ENCODE measurements at regions of chr16 and their contacts with region 1.

Region 1: DNA sequence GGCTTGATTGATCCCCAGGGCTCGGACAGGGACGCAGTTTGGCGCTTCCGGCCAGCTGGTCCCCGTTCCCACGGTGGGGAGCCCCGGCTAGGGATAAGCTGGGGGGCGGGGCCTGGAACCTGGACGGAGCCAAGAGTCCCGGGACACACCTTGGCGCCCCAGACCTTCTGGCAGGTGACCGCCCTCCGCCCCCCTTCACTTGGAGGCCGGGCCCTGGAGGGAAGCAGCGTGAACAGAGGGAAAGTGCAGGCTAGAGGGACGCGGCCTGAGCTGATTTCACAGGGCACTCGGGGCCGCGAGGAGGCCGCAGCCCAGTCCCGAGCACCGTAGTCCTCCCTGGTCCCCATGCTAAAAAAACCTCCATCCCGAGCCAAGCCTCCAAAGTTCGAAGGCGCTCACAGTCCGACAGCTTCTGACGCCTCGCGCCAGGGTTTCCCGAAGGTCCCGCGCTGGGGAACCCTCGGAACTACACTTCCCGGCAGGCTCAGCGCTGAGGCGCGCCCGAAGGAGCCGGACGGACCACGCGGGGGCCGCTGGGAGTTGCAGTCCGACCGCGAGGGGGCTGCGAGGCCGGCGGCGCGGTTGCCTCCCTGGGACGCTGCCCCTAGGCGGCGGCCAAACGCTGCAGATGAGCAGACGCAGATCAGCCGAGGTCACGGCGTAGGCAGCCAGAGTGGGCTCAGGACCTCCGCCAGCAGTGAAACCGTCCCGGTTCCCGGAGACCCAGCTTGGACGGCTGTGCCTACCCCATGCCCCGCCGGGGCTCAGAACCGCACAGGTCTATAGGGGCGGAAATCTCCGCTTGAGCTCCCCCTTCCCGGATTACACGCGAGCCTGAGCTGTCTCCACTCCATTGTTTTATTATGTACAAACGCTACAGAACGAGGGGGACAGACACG is at the start of gene TBX6:
- DNase-seq: peak; percentile 95
- H3K4me3 Mint-ChIP-seq: peak within 1 kb of the TSS; percentile 86
- H3K27ac Mint-ChIP-seq: peak within 1 kb of the TSS; percentile 95
- H3K4me1 Mint-ChIP-seq: peaks cover 54% of the 10 kb centered on the region
- H3K27me3 Mint-ChIP-seq: no peaks in the 10 kb centered on the region
- total RNA-seq, gene TBX6: 3.6 to 4.7 TPM

Region 2: GRCh38 chr16:30041846-30042267 is 49.9 kb before region 1 on chr16:
- CTCF ChIA-PET with region 1: interaction called, 15 read pairs
- intact Hi-C with region 1: no loop called
- DNase-seq: no peak
- H3K4me3 Mint-ChIP-seq: no peak overlapping the region
- H3K27ac Mint-ChIP-seq: no peak overlapping the region
- H3K4me1 Mint-ChIP-seq: no peaks in the 10 kb centered on the region
- H3K27me3 Mint-ChIP-seq: no peaks in the 10 kb centered on the region

Region 3: DNA sequence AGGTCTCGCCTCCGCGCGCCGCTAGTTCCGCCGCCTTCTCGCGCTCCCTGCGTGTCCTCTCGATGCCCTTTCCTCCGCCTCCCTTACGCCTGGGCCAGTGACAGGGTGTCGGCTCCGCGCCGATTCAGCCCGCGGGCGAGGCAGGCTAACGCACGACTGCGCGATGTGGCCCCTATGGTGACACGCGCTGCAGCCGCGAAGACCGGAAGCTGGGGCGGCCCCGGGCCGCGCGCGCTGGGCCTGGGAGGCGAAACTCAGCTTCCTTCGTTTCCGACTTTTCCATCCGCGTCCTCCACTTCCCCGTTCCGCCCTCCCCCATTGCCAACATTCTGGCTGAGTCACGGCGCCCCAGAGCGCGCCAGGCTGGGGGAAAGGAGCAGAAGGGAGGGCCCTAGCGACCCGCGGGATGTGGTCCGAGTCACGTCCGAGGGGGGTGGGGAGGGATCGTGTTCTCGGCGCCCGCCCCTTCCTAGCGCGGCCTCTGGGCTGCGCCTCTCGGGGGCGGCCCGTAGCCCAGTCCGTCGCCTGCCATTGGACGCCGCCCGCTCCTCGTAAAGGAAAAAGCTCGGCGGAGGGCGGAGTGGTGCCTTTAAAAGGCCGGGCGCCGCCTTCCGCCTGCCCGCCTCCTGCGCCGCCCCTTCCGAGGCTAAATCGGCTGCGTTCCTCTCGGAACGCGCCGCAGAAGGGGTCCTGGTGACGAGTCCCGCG is 26.4 kb before region 1 on chr16 and contains the start of gene ALDOA:
- CTCF ChIA-PET with region 1: interaction called, 16 read pairs
- intact Hi-C with region 1: loop called (anchors 1 kb)
- DNase-seq: peak; percentile 97
- H3K4me3 Mint-ChIP-seq: peak within 1 kb of the TSS; percentile 95
- H3K27ac Mint-ChIP-seq: peak within 1 kb of the TSS; percentile 98
- H3K4me1 Mint-ChIP-seq: peaks cover 32% of the 10 kb centered on the region
- H3K27me3 Mint-ChIP-seq: no peaks in the 10 kb centered on the region
- total RNA-seq, gene ALDOA: 1,750 to 1,795 TPM

Region 4: GRCh38 chr16:30112197-30113030 is 20.7 kb after region 1 on chr16:
- CTCF ChIA-PET with region 1: interaction called, 19 read pairs
- intact Hi-C with region 1: no loop called
- DNase-seq: peak; percentile 78
- H3K4me3 Mint-ChIP-seq: no peak overlapping the region
- H3K27ac Mint-ChIP-seq: peak overlapping the region; percentile 46
- H3K4me1 Mint-ChIP-seq: peaks cover 14% of the 10 kb centered on the region
- H3K27me3 Mint-ChIP-seq: no peaks in the 10 kb centered on the region

Region 5: GRCh38 chr16:30131869-30132475 is 40.2 kb after region 1 on chr16:
- CTCF ChIA-PET with region 1: interaction called, 4 read pairs
- intact Hi-C with region 1: loop called (anchors 2 kb)
- DNase-seq: no peak
- H3K4me3 Mint-ChIP-seq: no peak overlapping the region
- H3K27ac Mint-ChIP-seq: peak overlapping the region; percentile 46
- H3K4me1 Mint-ChIP-seq: peaks cover 4% of the 10 kb centered on the region
- H3K27me3 Mint-ChIP-seq: no peaks in the 10 kb centered on the region

Region 6: GRCh38 chr16:30370444-30371247 is 278.9 kb after region 1 on chr16 and contains the start of gene TBC1D10B:
- CTCF ChIA-PET with region 1: no interaction called
- intact Hi-C with region 1: loop called (anchors 1 kb)
- DNase-seq: peak; percentile 100
- H3K4me3 Mint-ChIP-seq: peak within 1 kb of the TSS; percentile 94
- H3K27ac Mint-ChIP-seq: peak within 1 kb of the TSS; percentile 98
- H3K4me1 Mint-ChIP-seq: peaks cover 40% of the 10 kb centered on the region
- H3K27me3 Mint-ChIP-seq: no peaks in the 10 kb centered on the region
- total RNA-seq, gene TBC1D10B: 36.6 to 38.4 TPM

Measured in activated naive CD4-positive, alpha-beta T cell treated with anti-CD3 and anti-CD28 coated beads for 36 hours (primary cell).